CD4-positive, alpha-beta memory T cell (primary cell): ENCODE measurements at regions of chr5 and their contacts with region 1.

Region 1: GRCh38 chr5:172114875-172115422 is 73.1 kb downstream of the STK10 start:
- DNase-seq: peak; percentile 56 to 83 (median 59)
- H3K4me3 ChIP-seq: peak overlapping the region in 1 of 2 donors; percentile 17
- H3K4me3 Mint-ChIP-seq: peak overlapping the region; percentile 69 to 92 (median 80)
- H3K27ac ChIP-seq: peak overlapping the region; percentile 74
- H3K27ac Mint-ChIP-seq: peak overlapping the region; percentile 94 to 100 (median 96)
- H3K4me1 ChIP-seq: peaks cover 93% of the 10 kb centered on the region
- H3K4me1 Mint-ChIP-seq: peaks cover 56 to 86% (median 72%) of the 10 kb centered on the region in 4 donors
- H3K27me3 ChIP-seq: no peaks in the 10 kb centered on the region
- H3K27me3 Mint-ChIP-seq: no peaks in the 10 kb centered on the region

Region 2: GRCh38 chr5:172095502-172096206 is 19.3 kb before region 1 on chr5:
- CTCF ChIA-PET with region 1: interaction called, 3 read pairs
- POLR2A ChIA-PET with region 1: interaction called, 10 read pairs
- intact Hi-C with region 1: no loop called
- DNase-seq: no peak
- H3K4me3 ChIP-seq: no peak overlapping the region
- H3K4me3 Mint-ChIP-seq: no peak overlapping the region
- H3K27ac ChIP-seq: no peak overlapping the region
- H3K27ac Mint-ChIP-seq: no peak overlapping the region
- H3K4me1 ChIP-seq: no peaks in the 10 kb centered on the region
- H3K4me1 Mint-ChIP-seq: peaks cover 4 to 12% (median 5%) of the 10 kb centered on the region in 4 donors
- H3K27me3 ChIP-seq: no peaks in the 10 kb centered on the region
- H3K27me3 Mint-ChIP-seq: no peaks in the 10 kb centered on the region

Region 3: DNA sequence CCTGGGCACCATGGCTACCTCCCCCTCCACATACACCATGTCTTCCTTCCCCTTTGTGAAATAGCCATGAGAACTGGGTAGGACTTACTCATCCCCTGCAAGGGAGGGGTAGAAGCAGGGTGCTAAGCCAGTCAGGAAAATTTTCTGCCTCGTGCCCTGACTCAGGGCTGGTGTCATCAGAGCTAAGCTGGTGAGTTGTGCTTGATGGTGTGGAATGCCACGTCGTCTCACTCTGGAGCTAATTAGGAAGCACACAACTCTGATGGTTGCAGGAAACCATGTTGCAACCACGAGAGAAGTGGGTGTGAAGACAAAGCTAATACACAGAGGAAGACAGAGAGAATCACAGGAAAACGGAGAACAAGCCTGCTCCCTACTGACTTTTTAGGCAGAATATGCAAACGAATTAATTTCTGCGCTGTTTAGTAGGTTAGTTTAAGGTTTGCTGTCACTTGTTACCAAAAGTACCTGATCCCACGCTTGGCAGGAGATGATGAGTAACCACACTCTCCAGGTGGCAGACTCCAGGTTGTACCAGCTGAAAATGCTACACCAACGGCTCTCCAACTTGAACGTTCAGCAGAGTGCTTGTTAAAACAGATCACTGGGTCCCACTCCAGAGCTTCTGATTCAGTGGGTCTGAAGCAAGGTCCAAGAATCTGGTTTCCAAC is 18.5 kb after region 1 on chr5:
- CTCF ChIA-PET with region 1: interaction called, 10 read pairs
- POLR2A ChIA-PET with region 1: interaction called, 23 read pairs
- intact Hi-C with region 1: loop called (anchors 1 kb)
- DNase-seq: peak in 4 of 5 donors; percentile 12 to 66 (median 18)
- H3K4me3 ChIP-seq: peak overlapping the region; percentile 2 to 10
- H3K4me3 Mint-ChIP-seq: peak overlapping the region; percentile 33 to 73 (median 58)
- H3K27ac ChIP-seq: peak overlapping the region; percentile 14
- H3K27ac Mint-ChIP-seq: peak overlapping the region; percentile 50 to 94 (median 86)
- H3K4me1 ChIP-seq: peaks cover 64% of the 10 kb centered on the region
- H3K4me1 Mint-ChIP-seq: peaks cover 47 to 76% (median 61%) of the 10 kb centered on the region in 4 donors
- H3K27me3 ChIP-seq: no peaks in the 10 kb centered on the region
- H3K27me3 Mint-ChIP-seq: no peaks in the 10 kb centered on the region

Region 4: DNA sequence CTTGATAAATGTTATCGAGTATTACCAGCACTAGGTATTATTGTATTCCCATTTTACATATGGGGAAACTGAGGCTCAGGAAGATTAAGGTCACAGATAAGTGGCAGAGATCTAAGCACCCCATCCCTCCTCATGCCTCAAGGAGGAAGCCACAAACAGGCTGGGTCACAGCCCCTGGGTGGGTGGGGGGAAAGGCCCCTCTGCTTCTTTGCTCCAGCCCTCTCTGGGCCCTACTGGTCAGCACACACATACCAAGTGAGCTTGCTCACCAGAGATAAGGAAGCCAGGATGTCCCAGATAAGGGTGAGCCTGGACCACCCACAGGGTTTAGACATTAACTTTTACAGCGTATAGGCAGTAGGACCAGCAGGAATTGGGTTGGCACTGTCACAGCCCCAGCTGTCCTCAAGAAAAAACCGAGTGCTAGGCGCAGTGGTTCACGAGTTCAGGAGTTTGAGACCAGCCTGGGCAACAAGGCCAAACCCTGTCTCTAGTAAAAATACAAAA is 27.8 kb after region 1 on chr5:
- CTCF ChIA-PET with region 1: no interaction called
- POLR2A ChIA-PET with region 1: interaction called, 11 read pairs
- intact Hi-C with region 1: no loop called
- DNase-seq: no peak
- H3K4me3 ChIP-seq: no peak overlapping the region
- H3K4me3 Mint-ChIP-seq: peak overlapping the region in 4 of 8 donors; percentile 15 to 61 (median 34)
- H3K27ac ChIP-seq: no peak overlapping the region
- H3K27ac Mint-ChIP-seq: peak overlapping the region; percentile 58 to 94 (median 72)
- H3K4me1 ChIP-seq: peaks cover 86% of the 10 kb centered on the region
- H3K4me1 Mint-ChIP-seq: peaks cover 66 to 87% (median 78%) of the 10 kb centered on the region in 4 donors
- H3K27me3 ChIP-seq: no peaks in the 10 kb centered on the region
- H3K27me3 Mint-ChIP-seq: no peaks in the 10 kb centered on the region

Region 5: GRCh38 chr5:172207511-172207910 is 92.6 kb after region 1 on chr5:
- CTCF ChIA-PET with region 1: no interaction called
- POLR2A ChIA-PET with region 1: no interaction called
- intact Hi-C with region 1: no loop called
- DNase-seq: no peak
- H3K4me3 ChIP-seq: no peak overlapping the region
- H3K4me3 Mint-ChIP-seq: no peak overlapping the region
- H3K27ac ChIP-seq: no peak overlapping the region
- H3K27ac Mint-ChIP-seq: no peak overlapping the region
- H3K4me1 ChIP-seq: no peaks in the 10 kb centered on the region
- H3K4me1 Mint-ChIP-seq: no peaks in the 10 kb centered on the region
- H3K27me3 ChIP-seq: no peaks in the 10 kb centered on the region
- H3K27me3 Mint-ChIP-seq: no peaks in the 10 kb centered on the region